ENCODE measurements at regions of chr2 and their contacts with region 1.

Region 1: DNA sequence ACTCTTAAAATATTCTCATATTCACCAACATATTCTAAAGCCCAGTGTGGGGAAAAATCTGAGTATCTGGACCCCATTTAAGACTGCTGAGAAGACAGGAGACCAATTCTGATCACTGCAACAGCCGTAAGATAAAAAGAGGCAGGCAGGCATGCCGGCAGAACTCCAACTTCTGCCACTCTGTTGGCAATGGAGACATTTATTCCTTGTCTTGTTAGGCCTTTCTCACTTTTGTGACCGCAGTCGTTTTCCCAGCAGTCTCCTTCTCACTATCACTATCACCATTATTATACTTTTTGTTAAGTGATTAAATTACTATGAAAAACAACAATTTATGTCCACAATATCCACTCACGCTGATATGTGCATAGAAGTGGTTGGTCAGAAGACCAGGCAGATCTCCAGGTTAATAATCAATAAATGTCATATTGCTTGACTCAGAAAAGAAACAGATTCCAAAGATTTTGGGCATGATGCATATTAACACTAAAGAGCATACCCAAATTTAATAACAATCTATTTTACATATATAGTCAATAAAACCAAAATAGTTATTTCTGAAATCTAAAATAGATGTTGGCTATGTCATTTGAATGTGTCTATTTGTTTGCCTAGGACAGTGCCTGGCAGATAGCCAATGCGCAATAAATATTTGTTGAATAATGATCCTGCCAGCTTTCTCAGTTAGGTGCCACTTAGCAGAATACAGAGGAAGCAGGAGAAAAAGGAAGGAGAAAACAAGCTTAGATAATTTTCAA is 38.2 kb downstream of the SESTD1 start:
- DNase-seq: no peak
- ATAC-seq: peak in 1 of 4 donors; percentile 55
- H3K4me3 ChIP-seq: no peak overlapping the region
- H3K27ac ChIP-seq: no peak overlapping the region
- H3K4me1 ChIP-seq: peaks cover 17% of the 10 kb centered on the region
- H3K27me3 ChIP-seq: no peaks in the 10 kb centered on the region
- CTCF ChIP-seq: no peak

Region 2: GRCh38 chr2:178998539-178998938 is 227.8 kb before region 1 on chr2:
- intact Hi-C with region 1: no loop called
- DNase-seq: no peak
- ATAC-seq: no peak
- H3K4me3 ChIP-seq: no peak overlapping the region
- H3K27ac ChIP-seq: no peak overlapping the region
- H3K4me1 ChIP-seq: no peaks in the 10 kb centered on the region
- H3K27me3 ChIP-seq: no peaks in the 10 kb centered on the region
- CTCF ChIP-seq: no peak

Region 3: DNA sequence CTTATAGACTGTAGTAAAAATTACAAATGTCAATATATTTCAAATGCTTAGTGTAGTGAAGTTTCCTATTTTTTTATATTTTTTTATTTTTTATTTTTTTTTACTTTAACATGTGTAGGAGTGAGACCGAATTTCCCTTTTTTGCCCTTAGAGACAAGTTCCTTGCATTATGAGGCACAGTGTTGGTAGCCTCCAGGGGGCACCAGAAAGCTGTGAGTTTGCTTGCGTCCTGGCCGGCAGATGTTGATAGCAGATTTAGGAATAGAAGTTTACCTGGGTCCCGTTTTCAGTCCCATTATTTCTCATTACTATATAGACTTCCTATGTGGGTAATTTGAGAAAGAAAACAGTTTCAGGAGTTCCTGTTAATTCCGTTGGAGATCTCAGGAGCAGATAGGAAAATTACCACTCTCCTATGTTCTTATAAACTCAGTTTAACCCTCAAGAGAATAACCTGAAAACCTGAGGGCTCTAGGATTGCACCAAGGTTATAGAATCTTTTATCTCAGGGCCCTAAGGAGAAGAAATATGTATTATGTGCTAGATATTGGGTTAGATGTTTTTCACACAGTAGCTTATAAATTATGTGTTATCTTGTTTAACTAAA is 195.8 kb after region 1 on chr2:
- intact Hi-C with region 1: loop called in 1 of 2 experiments (anchors 10 kb)
- DNase-seq: peak; percentile 64 to 76
- ATAC-seq: peak; percentile 46 to 91 (median 76)
- H3K4me3 ChIP-seq: no peak overlapping the region
- H3K27ac ChIP-seq: no peak overlapping the region
- H3K4me1 ChIP-seq: no peaks in the 10 kb centered on the region
- H3K27me3 ChIP-seq: no peaks in the 10 kb centered on the region
- CTCF ChIP-seq: peak; percentile 82